ENCODE measurements at regions of chr5 and their contacts with region 1.

Region 1: GRCh38 chr5:141524604-141525597 is 36.0 kb downstream of the PCDHGC5 start:
- DNase-seq: no peak
- ATAC-seq: peak; percentile 91
- H3K4me3 ChIP-seq: no peak overlapping the region
- H3K27ac ChIP-seq: peak overlapping the region; percentile 9; the same call in 1 of the 2 replicates
- H3K4me1 ChIP-seq: peaks cover 26% of the 10 kb centered on the region
- H3K27me3 ChIP-seq: no peaks in the 10 kb centered on the region
- CTCF ChIP-seq: peak; percentile 98 to 100 (median 99)
- EP300 ChIP-seq: 0 out of 4 replicates have a peak, but pooled peaks of 1 of the 2 experiments have one; percentile 38
- POLR2A ChIP-seq: 0 out of 2 replicates have a peak, but pooled peaks have one; percentile 34
- RAD21 ChIP-seq: peak; percentile 73

Region 2: GRCh38 chr5:141369994-141370848 is 154.7 kb before region 1 on chr5 and contains the start of gene PCDHGB3:
- CTCF ChIA-PET with region 1: interaction called, 11 read pairs
- POLR2A ChIA-PET with region 1: no interaction called
- RAD21 ChIA-PET with region 1: interaction called, 4 read pairs
- SMC1A ChIA-PET with region 1: interaction called, 3 read pairs
- in situ Hi-C with region 1: no loop called
- intact Hi-C with region 1: no loop called
- DNase-seq: no peak
- ATAC-seq: peak; percentile 96
- H3K4me3 ChIP-seq: 0 out of 2 replicates have a peak within 1 kb of the TSS, but pooled peaks have one; percentile 18
- H3K27ac ChIP-seq: no peak within 1 kb of the TSS
- H3K4me1 ChIP-seq: no peaks in the 10 kb centered on the region
- H3K27me3 ChIP-seq: no peaks in the 10 kb centered on the region; a peak in 1 of 4 replicates
- CTCF ChIP-seq: peak; percentile 38 to 72 (median 43)
- EP300 ChIP-seq: no peak
- POLR2A ChIP-seq: no peak
- RAD21 ChIP-seq: 0 out of 2 replicates have a peak, but pooled peaks have one; percentile 1
- polyA plus RNA-seq, gene PCDHGB3: not detected

Region 3: GRCh38 chr5:141420855-141421496 is 103.9 kb before region 1 on chr5 and contains the start of gene PCDHGA11:
- CTCF ChIA-PET with region 1: interaction called, 59 read pairs
- POLR2A ChIA-PET with region 1: interaction called, 3 read pairs
- RAD21 ChIA-PET with region 1: interaction called, 19 read pairs
- SMC1A ChIA-PET with region 1: interaction called, 22 read pairs
- in situ Hi-C with region 1: no loop called
- intact Hi-C with region 1: loop called (anchors 1 kb)
- DNase-seq: peak; percentile 37
- ATAC-seq: peak; percentile 77
- H3K4me3 ChIP-seq: peak within 1 kb of the TSS; percentile 76
- H3K27ac ChIP-seq: no peak within 1 kb of the TSS
- H3K4me1 ChIP-seq: peaks cover 4% of the 10 kb centered on the region; the same call in 1 of the 2 replicates
- H3K27me3 ChIP-seq: no peaks in the 10 kb centered on the region; a peak in 1 of 4 replicates
- CTCF ChIP-seq: peak; percentile 83 to 89 (median 89)
- EP300 ChIP-seq: no peak
- POLR2A ChIP-seq: no peak
- RAD21 ChIP-seq: peak; percentile 82
- polyA plus RNA-seq, gene PCDHGA11: 0.21 to 0.31 TPM

Region 4: DNA sequence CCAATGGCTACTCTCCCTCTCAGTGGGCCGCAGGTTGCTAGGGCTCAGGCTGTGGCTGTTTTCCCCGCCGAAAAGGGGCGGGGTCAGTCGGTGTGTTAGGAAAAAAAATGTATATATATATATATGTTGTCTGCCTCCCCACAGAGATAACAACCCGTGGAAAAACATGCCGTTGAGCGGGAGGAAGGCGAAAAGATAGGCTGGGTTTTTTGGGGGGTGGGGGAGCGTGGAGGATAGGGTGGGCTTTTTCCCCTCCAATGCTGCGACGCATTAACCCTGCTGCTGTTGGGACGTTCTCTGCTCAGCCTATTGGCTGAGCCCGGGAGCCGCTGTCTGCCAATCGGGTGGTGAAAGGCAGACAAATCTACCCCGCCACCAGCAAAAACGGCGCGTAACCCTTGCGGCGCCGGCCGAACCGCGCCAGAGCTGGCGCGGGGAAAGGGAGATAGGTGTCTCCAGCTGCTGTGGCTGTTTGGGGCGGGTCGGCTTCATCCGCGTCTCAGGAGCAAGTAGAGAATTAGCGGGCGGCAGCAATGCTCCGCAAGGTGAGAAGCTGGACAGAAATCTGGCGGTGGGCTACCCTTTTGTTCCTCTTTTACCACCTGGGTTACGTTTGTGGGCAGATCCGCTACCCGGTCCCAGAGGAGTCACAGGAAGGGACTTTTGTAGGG is 40.1 kb before region 1 on chr5 and contains the start of gene PCDHGC4:
- CTCF ChIA-PET with region 1: interaction called, 28 read pairs
- POLR2A ChIA-PET with region 1: interaction called, 4 read pairs
- RAD21 ChIA-PET with region 1: no interaction called
- SMC1A ChIA-PET with region 1: interaction called, 5 read pairs
- in situ Hi-C with region 1: loop called (anchors 5 kb)
- intact Hi-C with region 1: no loop called
- DNase-seq: no peak
- ATAC-seq: peak; percentile 73
- H3K4me3 ChIP-seq: peak within 1 kb of the TSS; percentile 36
- H3K27ac ChIP-seq: no peak within 1 kb of the TSS
- H3K4me1 ChIP-seq: peaks cover 6% of the 10 kb centered on the region
- H3K27me3 ChIP-seq: peaks cover 0 to 3% of the 10 kb centered on the region in 2 experiments; a peak in 2 of 4 replicates
- CTCF ChIP-seq: no peak
- EP300 ChIP-seq: no peak
- POLR2A ChIP-seq: no peak
- RAD21 ChIP-seq: no peak
- polyA plus RNA-seq, gene PCDHGC4: 0.13 to 0.18 TPM

Region 5: DNA sequence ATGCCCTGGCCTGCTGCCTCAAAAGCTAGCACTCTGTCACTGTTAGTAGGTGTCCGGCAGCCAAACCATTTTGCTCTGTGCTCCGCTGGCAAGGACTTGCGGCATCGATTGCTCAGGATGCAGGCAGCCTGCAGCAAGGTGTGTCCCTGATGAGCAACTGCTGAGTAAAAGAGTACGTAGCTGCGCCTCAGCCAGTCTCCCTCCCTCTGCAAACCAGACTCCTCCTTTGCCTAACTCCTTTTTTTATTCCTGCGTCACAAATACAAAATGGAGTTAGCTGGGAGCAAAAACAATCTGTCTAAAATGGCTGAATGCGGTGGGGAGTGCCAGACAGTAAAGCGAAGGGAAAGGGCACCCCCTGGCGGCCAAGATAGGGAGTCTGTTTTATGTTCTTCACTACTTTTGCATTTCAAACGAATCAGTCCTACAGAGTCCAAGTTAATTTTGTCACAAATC is 32.8 kb after region 1 on chr5:
- CTCF ChIA-PET with region 1: interaction called, 65 read pairs
- POLR2A ChIA-PET with region 1: no interaction called
- RAD21 ChIA-PET with region 1: interaction called, 9 read pairs
- SMC1A ChIA-PET with region 1: interaction called, 17 read pairs
- in situ Hi-C with region 1: no loop called
- intact Hi-C with region 1: loop called (anchors 1 kb)
- DNase-seq: peak; percentile 43
- ATAC-seq: peak; percentile 96
- H3K4me3 ChIP-seq: no peak overlapping the region
- H3K27ac ChIP-seq: peak overlapping the region; percentile 22; the same call in 1 of the 2 replicates
- H3K4me1 ChIP-seq: no peaks in the 10 kb centered on the region
- H3K27me3 ChIP-seq: no peaks in the 10 kb centered on the region
- CTCF ChIP-seq: peak; percentile 72 to 82 (median 78)
- EP300 ChIP-seq: no peak
- POLR2A ChIP-seq: 0 out of 2 replicates have a peak, but pooled peaks have one; percentile 32
- RAD21 ChIP-seq: peak; percentile 96